ENCODE measurements at regions of chr15 and their contacts with region 1.

Region 1: DNA sequence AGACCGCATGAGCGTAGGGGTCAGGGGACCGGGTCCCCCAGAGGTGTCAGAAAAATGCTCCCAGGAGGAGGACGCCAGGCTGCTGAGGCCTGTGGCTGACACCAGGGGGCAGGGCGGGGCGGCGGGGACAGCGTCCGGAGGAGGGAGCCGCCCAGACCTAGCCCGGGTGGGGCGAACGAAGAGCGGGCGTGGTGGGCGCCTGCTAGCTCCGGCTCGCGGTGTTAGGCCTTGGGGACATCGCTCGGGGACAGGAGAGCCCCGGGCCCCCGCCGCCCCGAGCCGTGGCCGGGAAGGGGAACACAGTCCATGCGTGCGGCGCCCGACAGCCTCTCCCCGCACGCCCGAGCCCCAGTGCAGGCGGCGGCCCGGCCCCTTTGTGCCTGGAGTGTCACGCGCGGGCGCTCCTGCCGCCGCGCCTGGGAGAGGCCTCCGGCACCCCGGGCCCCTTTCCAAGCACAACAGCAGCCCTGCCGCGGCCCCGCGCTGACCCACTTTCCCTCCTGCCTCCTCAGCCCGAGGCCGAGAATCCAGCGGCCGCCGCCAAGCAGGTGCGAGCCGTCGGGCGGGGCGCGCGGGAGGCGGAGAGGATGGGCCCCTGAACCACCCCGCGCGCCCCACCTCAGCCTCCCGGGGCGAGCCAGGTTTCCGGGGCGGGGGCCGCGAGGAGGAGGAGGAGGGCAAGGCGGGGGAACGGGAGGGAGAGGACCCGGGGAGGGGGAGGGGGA is 111.0 kb upstream of the KLF13 start:
- DNase-seq: peak in 9 of 10 donors; percentile 55 to 83 (median 70)
- H3K4me3 ChIP-seq: peak overlapping the region; percentile 53 to 84 (median 72)
- H3K27ac ChIP-seq: peak overlapping the region; percentile 72 to 98 (median 94)
- H3K27me3 ChIP-seq: no peaks in the 10 kb centered on the region
- CTCF ChIP-seq: peak; percentile 37 to 95 (median 84)

Region 2: DNA sequence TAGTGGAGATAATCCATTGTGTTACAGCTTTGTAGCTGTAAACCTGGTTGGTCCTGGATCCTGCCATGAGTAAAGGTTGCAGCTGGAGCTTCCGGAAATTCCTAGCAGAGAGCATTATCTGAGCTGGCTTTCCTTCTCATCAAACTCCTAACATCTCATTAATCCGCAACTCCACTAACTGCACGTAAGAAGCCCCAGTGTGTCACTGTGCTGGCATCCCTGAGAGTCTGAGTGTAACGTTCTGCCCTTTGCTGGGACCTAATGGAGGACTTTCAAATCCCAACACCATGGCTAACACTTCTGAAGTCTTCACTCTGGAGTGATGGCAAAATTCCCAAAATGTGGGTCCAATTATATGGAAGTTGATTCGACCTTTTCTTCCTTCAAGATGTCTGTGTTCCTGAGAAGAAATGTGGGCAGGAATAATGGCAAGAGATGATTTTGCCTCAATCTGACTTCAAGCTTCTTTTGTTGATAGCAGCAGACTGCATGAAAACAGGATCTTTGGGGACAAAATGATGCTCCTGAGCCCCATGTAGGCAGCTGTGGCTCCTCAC is 104.5 kb before region 1 on chr15:
- intact Hi-C with region 1: no loop called
- DNase-seq: no peak
- H3K4me3 ChIP-seq: no peak overlapping the region
- H3K27ac ChIP-seq: no peak overlapping the region
- H3K27me3 ChIP-seq: no peaks in the 10 kb centered on the region
- CTCF ChIP-seq: no peak

Region 3: GRCh38 chr15:31263751-31264558 is 48.3 kb after region 1 on chr15:
- intact Hi-C with region 1: loop called in 1 of 2 experiments (anchors 5 kb)
- DNase-seq: peak in 8 of 10 donors; percentile 20 to 72 (median 60)
- H3K4me3 ChIP-seq: no peak overlapping the region
- H3K27ac ChIP-seq: peak overlapping the region in 56 of 59 donors; percentile 6 to 93 (median 62)
- H3K27me3 ChIP-seq: no peaks in the 10 kb centered on the region
- CTCF ChIP-seq: no peak

Region 4: GRCh38 chr15:31280046-31280830 is 64.6 kb after region 1 on chr15:
- intact Hi-C with region 1: loop called (anchors 2 to 5 kb)
- DNase-seq: peak in 9 of 10 donors; percentile 78 to 95 (median 92)
- H3K4me3 ChIP-seq: peak overlapping the region in 7 of 59 donors; percentile 1 to 27 (median 16)
- H3K27ac ChIP-seq: peak overlapping the region in 58 of 59 donors; percentile 82 to 98 (median 93)
- H3K27me3 ChIP-seq: no peaks in the 10 kb centered on the region
- CTCF ChIP-seq: peak in 21 of 56 donors; percentile 2 to 37 (median 20)

Region 5: GRCh38 chr15:31326156-31326732 is 110.6 kb after region 1 on chr15:
- intact Hi-C with region 1: loop called (anchors 1 kb)
- DNase-seq: peak; percentile 95 to 99 (median 97)
- H3K4me3 ChIP-seq: peak overlapping the region; percentile 63 to 98 (median 88)
- H3K27ac ChIP-seq: peak overlapping the region; percentile 94 to 100 (median 100)
- H3K27me3 ChIP-seq: no peaks in the 10 kb centered on the region
- CTCF ChIP-seq: peak in 21 of 56 donors; percentile 7 to 42 (median 20)

Region 6: GRCh38 chr15:31365655-31366127 is 150.0 kb after region 1 on chr15:
- intact Hi-C with region 1: loop called in 1 of 2 experiments (anchors 2 kb)
- DNase-seq: peak; percentile 91 to 98 (median 96)
- H3K4me3 ChIP-seq: peak overlapping the region in 56 of 59 donors; percentile 0 to 58 (median 40)
- H3K27ac ChIP-seq: peak overlapping the region; percentile 76 to 100 (median 94)
- H3K27me3 ChIP-seq: no peaks in the 10 kb centered on the region
- CTCF ChIP-seq: peak in 51 of 56 donors; percentile 19 to 63 (median 42)

Region 7: GRCh38 chr15:31379042-31379441 is 163.4 kb after region 1 on chr15:
- intact Hi-C with region 1: loop called in 1 of 2 experiments (anchors 5 kb)
- DNase-seq: peak in 2 of 10 donors; percentile 53 to 55
- H3K4me3 ChIP-seq: no peak overlapping the region
- H3K27ac ChIP-seq: peak overlapping the region; percentile 20 to 91 (median 75)
- H3K27me3 ChIP-seq: no peaks in the 10 kb centered on the region
- CTCF ChIP-seq: peak in 14 of 56 donors; percentile 7 to 53 (median 22)

Region 8: GRCh38 chr15:31435261-31435911 is 219.7 kb after region 1 on chr15:
- intact Hi-C with region 1: loop called (anchors 5 kb)
- DNase-seq: peak; percentile 65 to 81 (median 72)
- H3K4me3 ChIP-seq: peak overlapping the region in 37 of 59 donors; percentile 0 to 46 (median 27)
- H3K27ac ChIP-seq: peak overlapping the region in 39 of 59 donors; percentile 1 to 82 (median 41)
- H3K27me3 ChIP-seq: no peaks in the 10 kb centered on the region
- CTCF ChIP-seq: peak in 55 of 56 donors; percentile 34 to 95 (median 84)

Measured in dorsolateral prefrontal cortex (tissue), 120 donors.